Sigmoid colon (tissue), 7 donors: ENCODE measurements at regions of chr16 and their contacts with region 1.

Region 1: GRCh38 chr16:67719048-67719777 is at the start of gene GFOD2:
- DNase-seq: peak; percentile 98
- H3K4me3 ChIP-seq: peak within 1 kb of the TSS; percentile 70 to 92 (median 85)
- H3K27ac ChIP-seq: peak within 1 kb of the TSS; percentile 80 to 89 (median 89)
- H3K4me1 ChIP-seq: peaks cover 0 to 28% (median 22%) of the 10 kb centered on the region in 4 donors
- H3K27me3 ChIP-seq: no peaks in the 10 kb centered on the region
- CTCF ChIP-seq: no peak
- EP300 ChIP-seq: no peak
- POLR2A ChIP-seq: peak; percentile 76 to 84
- total RNA-seq, gene GFOD2: 8.1 to 19.1 (median 11.1) TPM

Region 2: GRCh38 chr16:67672739-67673662 is 46.2 kb before region 1 on chr16:
- intact Hi-C with region 1: loop called (anchors 2 kb)
- DNase-seq: peak; percentile 83
- H3K4me3 ChIP-seq: no peak overlapping the region
- H3K27ac ChIP-seq: peak overlapping the region; percentile 58 to 72 (median 70)
- H3K4me1 ChIP-seq: peaks cover 0 to 27% (median 24%) of the 10 kb centered on the region in 4 donors
- H3K27me3 ChIP-seq: no peaks in the 10 kb centered on the region
- CTCF ChIP-seq: peak in 3 of 4 experiments; percentile 57 to 74 (median 66)
- EP300 ChIP-seq: no peak
- POLR2A ChIP-seq: no peak

Region 3: GRCh38 chr16:67736858-67737257 is 17.6 kb after region 1 on chr16:
- intact Hi-C with region 1: no loop called
- DNase-seq: no peak
- H3K4me3 ChIP-seq: no peak overlapping the region
- H3K27ac ChIP-seq: no peak overlapping the region
- H3K4me1 ChIP-seq: no peaks in the 10 kb centered on the region
- H3K27me3 ChIP-seq: no peaks in the 10 kb centered on the region
- CTCF ChIP-seq: no peak
- EP300 ChIP-seq: no peak
- POLR2A ChIP-seq: no peak

Region 4: DNA sequence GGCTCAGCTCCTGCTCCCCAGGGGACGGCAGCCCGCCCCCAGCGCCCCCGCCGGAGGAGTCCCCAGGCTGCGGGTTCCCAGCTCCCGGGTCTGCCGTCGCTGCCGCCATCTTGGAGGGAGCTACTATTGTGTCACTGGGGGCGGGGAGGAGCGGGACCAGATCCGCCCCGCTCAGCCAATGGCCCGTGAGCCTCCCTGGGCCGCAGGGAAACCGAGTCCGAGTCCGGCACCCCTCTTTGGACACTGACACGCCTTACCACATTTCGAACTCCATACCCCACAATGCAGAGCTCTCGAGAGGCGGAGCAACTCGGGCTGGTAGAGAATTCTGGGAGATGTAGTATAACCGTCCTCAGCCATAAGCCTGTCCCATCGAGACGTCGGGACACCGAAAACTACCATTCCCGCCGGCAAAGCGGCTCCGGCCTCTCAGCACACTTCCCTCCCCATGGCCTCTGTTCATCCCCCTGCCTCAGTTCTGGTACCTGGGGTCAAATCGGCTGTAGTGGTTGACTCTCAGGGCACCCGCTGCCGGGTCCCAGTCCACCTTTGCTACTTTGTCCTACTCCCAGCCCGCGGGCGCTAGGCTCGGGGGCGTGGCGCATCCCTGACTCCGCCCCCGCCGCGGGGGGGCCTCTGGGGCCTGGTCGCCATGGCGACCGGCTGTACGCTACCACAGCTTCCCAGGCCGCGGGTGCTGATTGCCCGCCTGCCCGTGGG is 87.4 kb after region 1 on chr16 and contains the starts of genes RANBP10 and TSNAXIP1:
- intact Hi-C with region 1: loop called (anchors 2 kb)
- DNase-seq: peak; percentile 99
- H3K4me3 ChIP-seq: peak within 1 kb of the TSS; percentile 83 to 99 (median 96)
- H3K27ac ChIP-seq: peak within 1 kb of the TSS; percentile 80 to 92 (median 86)
- H3K4me1 ChIP-seq: peaks cover 0 to 28% (median 22%) of the 10 kb centered on the region in 4 donors
- H3K27me3 ChIP-seq: no peaks in the 10 kb centered on the region
- CTCF ChIP-seq: no peak
- EP300 ChIP-seq: no peak
- POLR2A ChIP-seq: peak; percentile 39 to 75
- total RNA-seq, gene RANBP10: 7.1 to 10.0 (median 7.6) TPM
- total RNA-seq, gene TSNAXIP1: 1.1 to 2.9 (median 1.8) TPM

Region 5: DNA sequence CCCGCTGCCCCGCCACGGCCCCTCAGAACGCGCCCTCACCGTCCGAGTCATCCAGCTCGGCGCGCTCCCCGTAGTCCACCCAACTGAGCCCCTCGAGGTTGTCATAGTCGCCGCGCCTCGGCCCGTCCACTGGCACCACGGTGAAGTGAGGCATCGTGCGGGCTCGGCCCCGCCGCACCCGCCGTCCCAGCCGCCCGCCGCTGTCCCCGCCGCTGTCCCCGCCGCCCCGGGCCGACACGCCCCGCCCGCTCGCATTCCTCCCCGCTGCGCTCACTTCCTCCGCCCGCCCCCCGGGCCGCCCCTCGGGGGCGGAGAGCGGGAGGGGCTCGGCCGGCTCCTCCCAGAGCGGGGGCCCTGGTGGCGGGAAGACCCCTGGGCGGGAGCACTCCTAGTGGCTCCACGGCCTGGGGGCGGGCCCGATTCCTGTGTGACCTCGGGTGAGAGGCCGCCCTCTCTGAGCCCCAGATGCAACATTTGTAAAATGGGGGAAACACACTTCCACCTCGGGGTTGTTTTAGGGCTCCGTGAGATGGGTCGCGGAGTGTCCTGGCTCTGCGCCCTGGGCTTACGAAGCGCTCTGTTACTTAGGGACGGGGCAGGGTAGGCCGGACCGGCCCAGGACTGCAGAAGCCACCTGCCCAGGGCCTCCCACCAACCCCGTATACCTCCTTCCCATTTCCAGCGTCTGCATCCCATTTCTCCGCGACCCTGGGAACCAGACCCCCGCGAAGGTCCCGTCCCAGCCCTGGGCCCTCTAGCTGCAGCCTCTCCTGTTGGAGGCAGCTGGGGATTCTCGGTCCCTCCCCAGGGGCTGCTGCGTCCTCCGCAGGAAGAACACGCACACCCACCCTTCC is 249.4 kb after region 1 on chr16 and contains the start of gene SLC12A4:
- intact Hi-C with region 1: no loop called
- DNase-seq: peak; percentile 94
- H3K4me3 ChIP-seq: peak within 1 kb of the TSS; percentile 71 to 97 (median 84)
- H3K27ac ChIP-seq: peak within 1 kb of the TSS; percentile 93 to 99 (median 96)
- H3K4me1 ChIP-seq: peaks cover 0 to 44% (median 39%) of the 10 kb centered on the region in 4 donors
- H3K27me3 ChIP-seq: no peaks in the 10 kb centered on the region
- CTCF ChIP-seq: no peak
- EP300 ChIP-seq: no peak
- POLR2A ChIP-seq: peak; percentile 19 to 59
- total RNA-seq, gene SLC12A4: 27.6 to 77.0 (median 45.6) TPM